B cell (primary cell): ENCODE measurements at regions of chr5 and their contacts with region 1.

Region 1: DNA sequence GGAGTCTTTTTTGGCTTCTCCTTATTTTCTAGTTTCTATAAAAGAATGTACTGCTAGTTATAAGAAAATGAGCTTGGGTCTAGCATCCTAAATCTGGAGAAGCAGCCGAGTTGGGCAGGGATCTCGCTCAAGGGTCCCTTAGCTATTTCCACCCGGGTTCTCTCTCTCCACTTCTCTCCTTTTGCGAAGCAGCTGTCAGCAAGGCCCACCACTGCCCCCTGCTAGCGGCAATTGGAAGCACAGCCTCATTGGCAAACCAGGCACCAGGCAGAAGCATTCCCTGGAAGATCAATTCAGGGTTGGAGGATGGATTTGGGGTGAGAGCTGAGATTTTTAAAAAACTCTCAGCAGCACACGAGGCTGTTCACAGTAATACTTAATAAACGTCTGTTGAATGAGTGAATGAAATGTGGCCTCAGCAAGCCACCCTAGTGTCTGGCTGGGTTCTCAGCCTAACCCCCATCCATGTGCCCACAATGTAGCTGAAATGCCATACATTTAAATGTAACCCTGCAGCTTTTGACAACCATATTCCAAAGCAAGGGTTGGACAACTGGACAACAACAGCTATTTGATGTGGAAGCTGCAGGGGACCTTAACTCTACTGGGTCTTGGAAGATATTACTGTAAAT is 34.6 kb upstream of the TNIP1 start:
- DNase-seq: peak; percentile 78
- ATAC-seq: peak; percentile 88
- H3K4me3 ChIP-seq: no peak overlapping the region
- H3K4me3 Mint-ChIP-seq: no peak overlapping the region
- H3K27ac ChIP-seq: peak overlapping the region in 1 of 2 donors; percentile 51
- H3K27ac Mint-ChIP-seq: peak overlapping the region; percentile 56
- H3K4me1 ChIP-seq: peaks cover 4 to 11% of the 10 kb centered on the region in 2 donors
- H3K4me1 Mint-ChIP-seq: peaks cover 23% of the 10 kb centered on the region
- H3K27me3 ChIP-seq: no peaks in the 10 kb centered on the region
- H3K27me3 Mint-ChIP-seq: no peaks in the 10 kb centered on the region
- CTCF ChIP-seq: peak; percentile 98

Region 2: DNA sequence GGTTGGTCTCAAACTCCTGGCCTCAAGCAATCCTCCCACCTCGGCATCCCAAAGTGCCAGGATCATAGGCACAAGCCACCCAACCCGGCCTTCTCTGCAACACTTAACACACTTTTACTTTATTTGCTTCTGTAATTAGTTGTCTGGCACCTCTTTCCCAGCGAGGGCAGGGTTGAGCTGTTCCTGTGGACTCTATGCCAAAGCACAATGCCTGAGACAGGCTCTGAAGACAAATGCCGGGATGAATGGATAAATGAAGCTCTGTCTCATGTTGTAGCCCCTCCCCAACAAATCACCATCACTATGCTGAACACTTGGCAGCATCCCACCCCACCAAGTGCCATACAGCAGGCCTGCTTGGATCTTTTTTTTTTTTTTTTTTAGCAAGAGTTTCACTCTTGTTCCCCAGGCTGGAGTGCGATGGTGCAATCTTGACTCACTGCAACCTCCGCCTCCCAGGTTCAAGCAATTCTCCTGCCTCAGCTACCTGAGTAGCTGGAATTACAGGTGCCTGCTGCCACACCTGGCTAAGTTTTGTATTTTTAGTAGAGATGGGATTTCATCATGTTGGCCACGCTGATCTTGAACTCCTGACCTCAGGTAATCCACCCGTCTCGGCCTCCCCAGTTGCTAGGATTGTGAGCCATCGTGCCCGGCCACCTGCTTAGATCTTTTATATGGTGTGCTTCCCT is 73.7 kb before region 1 on chr5:
- CTCF ChIA-PET with region 1: interaction called, 918 read pairs
- POLR2A ChIA-PET with region 1: no interaction called
- intact Hi-C with region 1: no loop called
- DNase-seq: no peak
- ATAC-seq: no peak
- H3K4me3 ChIP-seq: no peak overlapping the region
- H3K4me3 Mint-ChIP-seq: no peak overlapping the region
- H3K27ac ChIP-seq: no peak overlapping the region
- H3K27ac Mint-ChIP-seq: no peak overlapping the region
- H3K4me1 ChIP-seq: no peaks in the 10 kb centered on the region
- H3K4me1 Mint-ChIP-seq: no peaks in the 10 kb centered on the region
- H3K27me3 ChIP-seq: no peaks in the 10 kb centered on the region
- H3K27me3 Mint-ChIP-seq: no peaks in the 10 kb centered on the region
- CTCF ChIP-seq: no peak

Region 3: GRCh38 chr5:151080623-151081430 is 34.6 kb before region 1 on chr5 and contains the start of gene TNIP1:
- CTCF ChIA-PET with region 1: interaction called, 85 read pairs
- POLR2A ChIA-PET with region 1: no interaction called
- intact Hi-C with region 1: loop called (anchors 1 kb)
- DNase-seq: peak; percentile 96
- ATAC-seq: peak; percentile 88
- H3K4me3 ChIP-seq: peak within 1 kb of the TSS; percentile 71 to 96 (median 85)
- H3K4me3 Mint-ChIP-seq: peak within 1 kb of the TSS; percentile 87
- H3K27ac ChIP-seq: peak within 1 kb of the TSS; percentile 96 to 100
- H3K27ac Mint-ChIP-seq: peak within 1 kb of the TSS; percentile 88
- H3K4me1 ChIP-seq: peaks cover 83 to 84% of the 10 kb centered on the region in 2 donors
- H3K4me1 Mint-ChIP-seq: peaks cover 82% of the 10 kb centered on the region
- H3K27me3 ChIP-seq: no peaks in the 10 kb centered on the region
- H3K27me3 Mint-ChIP-seq: no peaks in the 10 kb centered on the region
- CTCF ChIP-seq: no peak
- total RNA-seq, gene TNIP1: 294 and 295 TPM in 2 replicates

Region 4: DNA sequence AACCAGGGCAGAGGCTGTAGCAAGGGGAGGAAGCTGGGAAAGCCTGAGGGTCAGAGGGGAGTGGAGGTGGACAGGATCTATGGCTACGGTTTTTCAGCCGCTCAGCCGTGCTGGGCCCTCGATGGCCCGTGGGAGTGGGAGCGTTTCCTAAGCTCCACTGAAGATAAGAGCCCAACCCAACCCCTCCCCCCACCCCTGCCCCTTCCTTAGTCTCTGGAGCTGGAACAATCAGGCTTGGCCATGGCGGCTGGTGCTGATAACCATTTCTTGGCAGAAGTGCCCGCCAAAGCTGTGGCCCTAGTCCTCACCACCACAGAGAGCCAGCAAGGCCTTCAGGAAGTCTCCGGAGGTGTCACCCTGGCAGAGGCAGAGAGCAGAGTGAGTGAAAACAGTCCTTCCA is 14.2 kb before region 1 on chr5:
- CTCF ChIA-PET with region 1: interaction called, 51 read pairs
- POLR2A ChIA-PET with region 1: no interaction called
- intact Hi-C with region 1: loop called (anchors 2 kb)
- DNase-seq: no peak
- ATAC-seq: no peak
- H3K4me3 ChIP-seq: no peak overlapping the region
- H3K4me3 Mint-ChIP-seq: no peak overlapping the region
- H3K27ac ChIP-seq: peak overlapping the region in 1 of 2 donors; percentile 21
- H3K27ac Mint-ChIP-seq: no peak overlapping the region
- H3K4me1 ChIP-seq: peaks cover 22 to 32% of the 10 kb centered on the region in 2 donors
- H3K4me1 Mint-ChIP-seq: peaks cover 50% of the 10 kb centered on the region
- H3K27me3 ChIP-seq: no peaks in the 10 kb centered on the region
- H3K27me3 Mint-ChIP-seq: no peaks in the 10 kb centered on the region
- CTCF ChIP-seq: no peak

Region 5: GRCh38 chr5:151191659-151192058 is 76.3 kb after region 1 on chr5:
- CTCF ChIA-PET with region 1: interaction called, 10 read pairs
- POLR2A ChIA-PET with region 1: no interaction called
- intact Hi-C with region 1: no loop called
- DNase-seq: no peak
- ATAC-seq: no peak
- H3K4me3 ChIP-seq: peak overlapping the region in 1 of 5 experiments; percentile 8
- H3K4me3 Mint-ChIP-seq: peak overlapping the region; percentile 16
- H3K27ac ChIP-seq: peak overlapping the region; percentile 19 to 78
- H3K27ac Mint-ChIP-seq: peak overlapping the region; percentile 6
- H3K4me1 ChIP-seq: peaks cover 47 to 67% of the 10 kb centered on the region in 2 donors
- H3K4me1 Mint-ChIP-seq: peaks cover 76% of the 10 kb centered on the region
- H3K27me3 ChIP-seq: no peaks in the 10 kb centered on the region
- H3K27me3 Mint-ChIP-seq: no peaks in the 10 kb centered on the region
- CTCF ChIP-seq: no peak

Region 6: DNA sequence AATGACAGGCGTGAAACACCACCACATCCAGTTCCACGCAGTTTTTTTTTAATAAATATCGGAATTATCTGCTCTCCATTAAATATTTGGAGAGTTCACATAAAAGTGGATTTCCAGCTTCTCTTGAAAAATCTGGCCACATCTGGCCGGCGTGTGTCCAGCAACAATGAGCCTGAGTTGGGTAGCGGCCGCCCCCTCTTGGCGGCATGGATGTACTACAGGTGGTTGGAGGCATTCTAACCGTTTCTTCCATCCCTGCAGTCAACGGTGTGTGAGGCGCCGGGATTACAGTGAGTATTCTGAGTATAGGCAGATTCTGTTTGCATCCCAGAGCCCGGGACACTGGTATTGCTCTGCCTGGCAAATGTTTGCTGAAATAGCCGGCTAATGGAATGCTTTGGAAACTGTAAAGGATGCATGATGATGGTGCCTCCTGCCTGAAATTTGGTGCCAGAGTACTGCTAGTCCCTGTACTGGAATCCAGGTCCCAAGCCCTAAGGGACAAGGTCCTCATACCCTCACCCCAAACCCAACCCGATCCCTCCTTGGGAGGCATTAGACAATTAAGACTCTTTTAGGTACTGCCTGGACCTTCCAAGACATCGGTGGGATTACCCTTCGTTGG is 124.0 kb after region 1 on chr5:
- CTCF ChIA-PET with region 1: interaction called, 67 read pairs
- POLR2A ChIA-PET with region 1: no interaction called
- intact Hi-C with region 1: no loop called
- DNase-seq: peak; percentile 66
- ATAC-seq: peak; percentile 64
- H3K4me3 ChIP-seq: peak overlapping the region in 2 of 5 experiments; percentile 7 to 20
- H3K4me3 Mint-ChIP-seq: peak overlapping the region; percentile 84
- H3K27ac ChIP-seq: no peak overlapping the region
- H3K27ac Mint-ChIP-seq: peak overlapping the region; percentile 82
- H3K4me1 ChIP-seq: peaks cover 81 to 82% of the 10 kb centered on the region in 2 donors
- H3K4me1 Mint-ChIP-seq: peaks cover 95% of the 10 kb centered on the region
- H3K27me3 ChIP-seq: no peaks in the 10 kb centered on the region
- H3K27me3 Mint-ChIP-seq: no peaks in the 10 kb centered on the region
- CTCF ChIP-seq: peak; percentile 99